Activated T-helper 2 cell treated with anti-CD3 and anti-CD28 coated beads, Interferon-gamma antibody, Interleukin-2, Interleukin-4, amounts not matched to agents 10 μg/mL and 5 μg/mL and 100 μg/mL, durations not matched to agents 14 hours and 24 hours and 36 hours (primary cell): ENCODE measurements at regions of chr6 and their contacts with region 1.

Region 1: GRCh38 chr6:151285122-151285521 is 45.4 kb downstream of the AKAP12 start:
- DNase-seq: no peak
- H3K4me3 Mint-ChIP-seq: no peak overlapping the region
- H3K27ac Mint-ChIP-seq: peak overlapping the region; percentile 48
- H3K4me1 Mint-ChIP-seq: peaks cover 55% of the 10 kb centered on the region
- H3K27me3 Mint-ChIP-seq: peaks cover 24% of the 10 kb centered on the region

Region 2: GRCh38 chr6:150924808-150925589 is 360.1 kb before region 1 on chr6:
- intact Hi-C with region 1: no loop called
- DNase-seq: no peak
- H3K4me3 Mint-ChIP-seq: no peak overlapping the region
- H3K27ac Mint-ChIP-seq: no peak overlapping the region
- H3K4me1 Mint-ChIP-seq: peaks cover 3% of the 10 kb centered on the region
- H3K27me3 Mint-ChIP-seq: no peaks in the 10 kb centered on the region

Region 3: GRCh38 chr6:151240036-151240685 is 45.0 kb before region 1 on chr6:
- intact Hi-C with region 1: loop called (anchors 2 kb)
- DNase-seq: peak; percentile 28
- H3K4me3 Mint-ChIP-seq: peak overlapping the region; percentile 93
- H3K27ac Mint-ChIP-seq: peak overlapping the region; percentile 86
- H3K4me1 Mint-ChIP-seq: peaks cover 18% of the 10 kb centered on the region
- H3K27me3 Mint-ChIP-seq: peaks cover 57% of the 10 kb centered on the region